ENCODE measurements at regions of chr6 and their contacts with region 1.

Region 1: DNA sequence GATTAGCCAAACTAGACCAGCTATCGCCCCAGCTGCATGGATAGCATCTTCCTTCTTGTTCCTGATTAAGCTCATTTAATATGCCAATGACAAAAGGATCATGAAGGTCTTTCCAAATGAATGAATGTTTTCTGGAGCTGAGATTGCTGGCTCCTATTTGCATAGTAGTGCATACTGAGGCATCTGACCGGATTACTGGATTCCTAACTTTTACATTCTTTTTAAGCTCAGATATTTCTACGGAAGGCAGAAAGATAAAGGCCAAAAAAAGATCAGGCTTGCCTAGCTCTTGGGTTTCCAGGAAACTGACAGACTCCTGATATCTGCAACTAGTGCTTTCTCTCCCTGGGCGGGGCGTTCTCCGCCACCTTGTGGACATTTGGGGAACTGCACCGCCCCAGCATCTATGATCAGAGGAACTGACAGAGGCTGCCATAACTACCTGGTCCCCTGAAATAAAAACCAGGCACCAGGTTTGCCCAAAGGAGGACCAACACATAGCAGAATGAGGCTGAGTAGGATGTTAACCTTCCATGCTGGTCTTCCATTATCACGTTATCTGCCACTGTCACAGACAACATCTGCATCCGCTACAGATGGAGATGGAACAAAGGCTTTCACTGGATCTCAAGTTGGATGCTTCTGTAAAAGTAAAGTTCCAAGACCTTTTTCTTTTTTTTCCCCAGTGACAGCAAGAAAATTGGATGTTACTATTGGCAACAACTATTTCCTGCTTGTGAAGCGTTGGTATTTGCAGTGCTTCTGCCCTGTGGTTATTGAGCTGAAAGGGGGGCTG is 33.2 kb downstream of the NT5E start:
- DNase-seq: peak; percentile 79 to 86
- ATAC-seq: peak; percentile 77 to 92 (median 80)
- H3K4me3 ChIP-seq: no peak overlapping the region
- H3K27ac ChIP-seq: no peak overlapping the region
- H3K4me1 ChIP-seq: no peaks in the 10 kb centered on the region
- H3K27me3 ChIP-seq: no peaks in the 10 kb centered on the region
- CTCF ChIP-seq: peak; percentile 100

Region 2: GRCh38 chr6:85354761-85355618 is 128.1 kb before region 1 on chr6:
- intact Hi-C with region 1: loop called (anchors 1 to 2 kb)
- DNase-seq: peak; percentile 67 to 79
- ATAC-seq: peak; percentile 67 to 81 (median 78)
- H3K4me3 ChIP-seq: no peak overlapping the region
- H3K27ac ChIP-seq: no peak overlapping the region
- H3K4me1 ChIP-seq: no peaks in the 10 kb centered on the region
- H3K27me3 ChIP-seq: no peaks in the 10 kb centered on the region
- CTCF ChIP-seq: peak; percentile 94